ENCODE measurements at regions of chrX and their contacts with region 1.

Region 1: GRCh38 chrX:5388087-5388486 is 840.6 kb downstream of the NLGN4X start:
- DNase-seq: no peak
- ATAC-seq: no peak
- H3K4me3 ChIP-seq: no peak overlapping the region
- H3K27ac ChIP-seq: no peak overlapping the region
- H3K4me1 ChIP-seq: no peaks in the 10 kb centered on the region
- H3K27me3 ChIP-seq: no peaks in the 10 kb centered on the region
- CTCF ChIP-seq: no peak
- EP300 ChIP-seq: no peak
- POLR2A ChIP-seq: no peak
- RAD21 ChIP-seq: no peak

Region 2: GRCh38 chrX:4466376-4466775 is 921.7 kb before region 1 on chrX:
- CTCF ChIA-PET with region 1: no interaction called
- POLR2A ChIA-PET with region 1: no interaction called
- in situ Hi-C with region 1: no loop called
- intact Hi-C with region 1: loop called (anchors 10 kb)
- DNase-seq: no peak
- ATAC-seq: no peak
- H3K4me3 ChIP-seq: no peak overlapping the region
- H3K27ac ChIP-seq: no peak overlapping the region
- H3K4me1 ChIP-seq: no peaks in the 10 kb centered on the region
- H3K27me3 ChIP-seq: no peaks in the 10 kb centered on the region
- CTCF ChIP-seq: no peak
- EP300 ChIP-seq: no peak
- POLR2A ChIP-seq: no peak
- RAD21 ChIP-seq: no peak

Region 3: DNA sequence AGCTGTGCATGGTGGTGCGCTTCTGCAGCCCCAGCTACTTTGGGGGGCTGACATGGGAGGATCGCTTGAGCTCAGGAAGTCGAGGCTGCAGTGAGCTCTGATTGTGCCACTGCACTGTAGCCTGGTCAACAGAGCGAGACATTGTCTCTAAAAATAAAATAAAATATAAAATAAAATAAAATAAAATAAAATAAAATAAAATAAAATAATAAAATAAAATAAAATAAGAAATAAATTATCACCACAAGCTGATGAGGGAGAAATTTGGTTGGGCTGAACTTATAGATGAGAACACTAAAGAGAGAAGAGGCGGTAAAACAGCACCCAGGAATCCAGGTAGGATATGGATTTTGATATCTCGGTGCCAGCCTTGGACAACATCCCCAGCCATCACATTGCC is 93.1 kb before region 1 on chrX:
- CTCF ChIA-PET with region 1: no interaction called
- POLR2A ChIA-PET with region 1: no interaction called
- in situ Hi-C with region 1: no loop called
- intact Hi-C with region 1: no loop called
- DNase-seq: no peak
- ATAC-seq: no peak
- H3K4me3 ChIP-seq: no peak overlapping the region
- H3K27ac ChIP-seq: no peak overlapping the region
- H3K4me1 ChIP-seq: no peaks in the 10 kb centered on the region
- H3K27me3 ChIP-seq: no peaks in the 10 kb centered on the region
- CTCF ChIP-seq: no peak
- EP300 ChIP-seq: no peak
- POLR2A ChIP-seq: no peak
- RAD21 ChIP-seq: no peak

Region 4: GRCh38 chrX:5788910-5789309 is 400.8 kb after region 1 on chrX:
- CTCF ChIA-PET with region 1: no interaction called
- POLR2A ChIA-PET with region 1: no interaction called
- in situ Hi-C with region 1: no loop called
- intact Hi-C with region 1: no loop called
- DNase-seq: no peak
- ATAC-seq: no peak
- H3K4me3 ChIP-seq: no peak overlapping the region
- H3K27ac ChIP-seq: no peak overlapping the region
- H3K4me1 ChIP-seq: no peaks in the 10 kb centered on the region
- H3K27me3 ChIP-seq: no peaks in the 10 kb centered on the region
- CTCF ChIP-seq: no peak
- EP300 ChIP-seq: no peak
- POLR2A ChIP-seq: no peak
- RAD21 ChIP-seq: no peak

Measured in HepG2 (cell line).